Gastrocnemius medialis (tissue), 4 donors: ENCODE measurements at regions of chr2 and their contacts with region 1.

Region 1: GRCh38 chr2:23566236-23567142 is 181.5 kb downstream of the KLHL29 start:
- DNase-seq: no peak
- ATAC-seq: no peak
- H3K4me3 ChIP-seq: no peak overlapping the region
- H3K27ac ChIP-seq: peak overlapping the region; percentile 85 to 93 (median 89)
- H3K4me1 ChIP-seq: peaks cover 41 to 63% of the 10 kb centered on the region in 2 donors
- H3K27me3 ChIP-seq: no peaks in the 10 kb centered on the region
- CTCF ChIP-seq: peak in 3 of 5 experiments; percentile 23 to 45 (median 44)
- POLR2A ChIP-seq: no peak

Region 2: GRCh38 chr2:23584054-23584745 is 17.7 kb after region 1 on chr2:
- in situ Hi-C with region 1: no loop called
- intact Hi-C with region 1: loop called (anchors 2 kb)
- DNase-seq: peak; percentile 47 to 77
- ATAC-seq: peak; percentile 62 to 63
- H3K4me3 ChIP-seq: no peak overlapping the region
- H3K27ac ChIP-seq: peak overlapping the region; percentile 73 to 93 (median 86)
- H3K4me1 ChIP-seq: peaks cover 14 to 49% of the 10 kb centered on the region in 2 donors
- H3K27me3 ChIP-seq: no peaks in the 10 kb centered on the region
- CTCF ChIP-seq: no peak
- POLR2A ChIP-seq: peak in 1 of 2 donors; percentile 9